ENCODE measurements at regions of chr10 and their contacts with region 1.

Region 1: DNA sequence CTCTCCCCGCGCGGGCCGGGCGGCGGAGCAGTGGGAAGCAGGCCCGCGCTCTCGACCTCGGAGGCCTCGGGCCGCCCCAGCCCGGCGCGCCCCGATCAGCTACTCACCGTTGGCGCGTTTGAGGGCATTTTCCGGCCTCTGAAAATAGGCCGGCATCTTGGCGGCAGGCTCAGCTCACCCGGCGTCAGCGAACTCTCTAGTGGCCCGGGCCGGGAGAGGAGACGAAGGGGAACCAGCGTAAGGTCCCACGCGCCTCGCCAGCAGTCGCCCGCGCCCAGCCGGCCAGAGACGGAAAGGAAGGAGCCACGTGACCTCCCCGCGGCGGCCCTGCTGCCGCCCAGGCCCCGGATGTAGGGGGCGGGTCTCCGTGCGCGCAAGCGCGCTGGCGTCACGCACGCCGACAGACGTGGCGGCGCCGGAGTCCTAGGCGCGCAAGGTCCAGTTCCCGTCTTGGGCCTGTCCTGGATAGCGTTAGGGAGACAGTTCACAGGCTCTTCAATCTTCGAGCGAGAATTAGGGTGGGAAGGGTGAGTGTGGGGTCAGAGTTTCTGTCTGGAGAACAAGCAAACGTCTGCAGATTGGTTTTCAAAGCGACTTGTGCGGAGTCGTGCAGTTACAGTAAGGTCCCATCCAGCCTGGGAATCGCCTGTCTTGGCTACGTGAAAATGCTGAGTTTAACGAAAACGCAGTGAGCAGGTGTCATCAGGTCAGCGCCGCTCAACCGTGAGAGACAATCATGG is at the start of gene EIF3A:
- DNase-seq: peak; percentile 95
- H3K4me3 ChIP-seq: peak within 1 kb of the TSS; percentile 84
- H3K27ac ChIP-seq: peak within 1 kb of the TSS; percentile 97
- H3K4me1 ChIP-seq: peaks cover 13% of the 10 kb centered on the region
- H3K27me3 ChIP-seq: no peaks in the 10 kb centered on the region
- CTCF ChIP-seq: no peak
- total RNA-seq, gene EIF3A: 169 and 181 TPM in 2 replicates

Region 2: DNA sequence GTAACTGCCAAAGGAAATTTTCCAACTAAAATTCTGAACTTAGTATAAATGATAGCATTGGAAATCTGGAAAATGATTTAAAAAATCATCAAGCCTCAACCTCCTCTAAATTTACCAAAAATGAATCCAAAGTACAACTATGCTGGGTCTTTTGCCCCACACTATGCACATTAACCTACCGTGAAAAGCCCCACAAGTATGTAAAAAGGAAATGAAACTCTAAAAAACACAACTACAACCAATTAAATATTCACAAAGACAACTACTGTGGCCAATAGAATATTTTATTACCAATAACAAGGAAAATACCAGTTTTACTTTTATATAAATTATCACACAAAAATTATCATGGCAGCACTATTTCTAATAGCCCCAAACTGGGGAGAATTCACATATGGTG is 19.3 kb before region 1 on chr10:
- CTCF ChIA-PET with region 1: no interaction called
- POLR2A ChIA-PET with region 1: interaction called, 18 read pairs
- intact Hi-C with region 1: no loop called
- DNase-seq: no peak
- H3K4me3 ChIP-seq: no peak overlapping the region
- H3K27ac ChIP-seq: no peak overlapping the region
- H3K4me1 ChIP-seq: peaks cover 17% of the 10 kb centered on the region
- H3K27me3 ChIP-seq: no peaks in the 10 kb centered on the region
- CTCF ChIP-seq: no peak

Region 3: DNA sequence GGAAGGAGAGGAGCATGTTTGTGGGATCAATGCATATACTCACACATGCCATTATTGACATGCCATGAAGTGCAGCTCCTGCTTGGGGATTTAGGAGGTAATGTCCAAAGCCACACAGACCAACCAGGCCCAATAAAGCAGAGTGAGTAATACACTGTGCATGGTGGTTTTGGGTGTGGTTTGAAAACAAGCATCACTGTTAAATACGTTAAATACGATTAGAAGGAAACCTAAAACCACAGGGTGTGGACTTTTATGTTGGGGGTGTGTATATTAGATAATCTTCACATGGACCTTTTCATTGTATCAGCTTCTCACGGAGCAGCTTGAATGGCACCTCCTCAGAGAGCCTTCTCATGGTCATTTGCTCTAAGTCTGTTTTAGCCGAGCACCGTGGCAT is 10.3 kb after region 1 on chr10:
- CTCF ChIA-PET with region 1: interaction called, 10 read pairs
- POLR2A ChIA-PET with region 1: no interaction called
- intact Hi-C with region 1: no loop called
- DNase-seq: no peak
- H3K4me3 ChIP-seq: no peak overlapping the region
- H3K27ac ChIP-seq: no peak overlapping the region
- H3K4me1 ChIP-seq: no peaks in the 10 kb centered on the region
- H3K27me3 ChIP-seq: no peaks in the 10 kb centered on the region
- CTCF ChIP-seq: no peak

Region 4: GRCh38 chr10:119103903-119104652 is 23.4 kb after region 1 on chr10 and contains the start of gene DENND10:
- CTCF ChIA-PET with region 1: no interaction called
- POLR2A ChIA-PET with region 1: no interaction called
- intact Hi-C with region 1: loop called (anchors 1 kb)
- DNase-seq: peak; percentile 79
- H3K4me3 ChIP-seq: peak within 1 kb of the TSS; percentile 77
- H3K27ac ChIP-seq: peak within 1 kb of the TSS; percentile 67
- H3K4me1 ChIP-seq: peaks cover 7% of the 10 kb centered on the region
- H3K27me3 ChIP-seq: no peaks in the 10 kb centered on the region
- CTCF ChIP-seq: no peak
- total RNA-seq, gene DENND10: 41.2 and 55.2 TPM in 2 replicates

Measured in A673 (cell line).